ENCODE measurements at regions of chr5 and their contacts with region 1.

Region 1: DNA sequence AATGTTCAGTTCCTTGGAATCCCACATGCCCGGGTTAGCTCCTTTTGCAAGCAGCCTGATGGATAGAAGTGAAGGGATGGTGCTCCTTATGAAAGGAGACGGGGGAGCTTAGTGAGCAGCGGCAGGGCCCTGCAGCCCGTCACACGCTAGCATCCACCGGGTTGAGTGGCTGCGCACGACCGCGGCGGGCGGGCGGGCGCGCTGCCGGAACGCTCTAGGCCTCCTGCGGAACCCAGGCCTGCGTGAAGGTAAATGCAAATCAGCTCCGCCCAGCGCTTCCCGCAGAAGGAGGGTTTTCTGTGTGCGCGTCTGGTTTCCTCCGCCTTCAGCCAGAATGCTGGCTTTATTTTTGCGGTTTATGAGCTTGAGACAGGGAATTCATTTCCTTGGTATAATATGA is 19.8 kb downstream of the IL12B start:
- DNase-seq: peak; percentile 19 to 66
- H3K4me3 ChIP-seq: peak overlapping the region in 3 of 4 experiments; percentile 26 to 51 (median 38); a peak in 6 of 8 replicates
- H3K27ac ChIP-seq: no peak overlapping the region
- H3K4me1 ChIP-seq: peaks cover 0 to 2% (median under 1%) of the 10 kb centered on the region in 4 experiments; a peak in 3 of 7 replicates
- H3K27me3 ChIP-seq: peaks cover 0 to 14% (median 12%) of the 10 kb centered on the region in 4 experiments; a peak in 5 of 7 replicates
- CTCF ChIP-seq: no peak
- EP300 ChIP-seq: no peak
- POLR2A ChIP-seq: no peak
- RAD21 ChIP-seq: no peak

Region 2: DNA sequence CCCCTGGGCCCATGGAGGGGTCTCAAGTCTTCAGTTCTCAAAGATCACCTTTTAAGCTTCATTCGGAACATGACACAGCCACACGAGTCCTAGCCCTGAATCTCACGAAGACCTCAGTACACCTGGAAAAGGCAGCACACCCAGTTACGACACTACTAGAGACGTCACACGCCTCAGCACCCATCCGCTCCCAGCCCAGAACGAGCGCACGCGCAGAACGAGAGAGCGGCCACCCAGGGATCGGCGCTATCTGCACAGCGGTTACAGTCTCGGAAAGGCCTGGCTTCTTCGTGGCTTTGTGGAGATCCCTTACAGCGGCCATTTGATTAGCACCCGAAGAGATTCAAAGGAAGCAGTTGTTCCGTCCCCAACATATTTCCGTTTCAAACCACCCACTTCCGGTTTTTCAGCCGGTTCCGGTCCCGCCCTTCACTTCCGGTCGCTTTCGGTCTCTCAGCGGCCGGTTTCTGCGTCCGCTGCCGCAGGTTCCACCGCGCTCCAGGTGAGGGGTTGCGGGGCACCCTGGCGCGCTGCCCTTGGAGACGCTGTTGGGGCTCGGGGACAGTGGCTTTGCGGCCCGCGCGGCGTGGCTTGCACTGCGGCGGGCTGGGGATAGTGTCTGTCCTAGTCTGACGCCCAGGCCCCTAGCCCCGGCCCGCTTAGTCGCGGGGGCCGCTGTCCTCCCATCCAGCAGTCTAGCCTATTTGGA is 47.5 kb before region 1 on chr5 and contains the start of gene UBLCP1:
- CTCF ChIA-PET with region 1: no interaction called
- POLR2A ChIA-PET with region 1: no interaction called
- DNase-seq: peak; percentile 31 to 83
- H3K4me3 ChIP-seq: peak within 1 kb of the TSS; percentile 88 to 99 (median 97)
- H3K27ac ChIP-seq: peak within 1 kb of the TSS; percentile 90
- H3K4me1 ChIP-seq: no peaks in the 10 kb centered on the region; a peak in 3 of 7 replicates
- H3K27me3 ChIP-seq: peaks cover 0 to 1% (median 0%) of the 10 kb centered on the region in 4 experiments; a peak in 2 of 7 replicates
- CTCF ChIP-seq: no peak
- EP300 ChIP-seq: no peak
- POLR2A ChIP-seq: peak in 1 of 2 experiments; percentile 82; a peak in 2 of 3 replicates
- RAD21 ChIP-seq: no peak
- total RNA-seq, gene UBLCP1: 40.9 and 43.0 TPM in 2 replicates

Region 3: DNA sequence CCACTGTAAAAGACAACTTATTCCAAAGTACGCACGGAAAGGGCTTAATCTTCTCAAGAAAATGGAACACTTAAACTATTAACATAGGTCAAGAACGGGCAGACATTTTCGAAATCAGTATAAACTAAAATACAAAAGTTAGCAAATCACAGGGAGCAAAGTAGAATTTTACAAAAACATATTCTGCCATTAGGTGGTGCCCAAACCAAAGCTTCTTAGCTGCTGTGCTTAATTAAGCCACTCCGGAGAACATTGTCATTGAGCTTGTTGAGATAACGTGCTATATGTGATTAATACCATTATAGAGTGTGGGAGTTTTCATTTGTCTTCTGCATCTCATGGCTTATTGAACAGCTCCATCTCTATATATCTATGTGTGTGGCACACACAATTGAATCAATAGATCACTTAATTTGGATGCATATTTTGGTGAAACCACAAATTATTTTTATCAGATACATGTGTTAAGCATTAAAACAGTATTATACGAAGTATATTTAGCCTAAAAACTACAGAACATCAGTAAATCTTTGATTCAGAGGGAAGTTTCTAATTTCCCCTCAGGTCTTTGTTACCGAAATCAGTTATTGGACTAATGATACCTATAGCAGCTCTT is 24.0 kb before region 1 on chr5:
- CTCF ChIA-PET with region 1: interaction called, 34 read pairs
- POLR2A ChIA-PET with region 1: interaction called, 4 read pairs
- DNase-seq: no peak
- H3K4me3 ChIP-seq: no peak overlapping the region
- H3K27ac ChIP-seq: no peak overlapping the region
- H3K4me1 ChIP-seq: no peaks in the 10 kb centered on the region
- H3K27me3 ChIP-seq: no peaks in the 10 kb centered on the region
- CTCF ChIP-seq: peak in 2 of 3 experiments; percentile 35 to 43; a peak in 2 of 4 replicates
- EP300 ChIP-seq: no peak
- POLR2A ChIP-seq: no peak
- RAD21 ChIP-seq: peak; percentile 80 to 81

Region 4: DNA sequence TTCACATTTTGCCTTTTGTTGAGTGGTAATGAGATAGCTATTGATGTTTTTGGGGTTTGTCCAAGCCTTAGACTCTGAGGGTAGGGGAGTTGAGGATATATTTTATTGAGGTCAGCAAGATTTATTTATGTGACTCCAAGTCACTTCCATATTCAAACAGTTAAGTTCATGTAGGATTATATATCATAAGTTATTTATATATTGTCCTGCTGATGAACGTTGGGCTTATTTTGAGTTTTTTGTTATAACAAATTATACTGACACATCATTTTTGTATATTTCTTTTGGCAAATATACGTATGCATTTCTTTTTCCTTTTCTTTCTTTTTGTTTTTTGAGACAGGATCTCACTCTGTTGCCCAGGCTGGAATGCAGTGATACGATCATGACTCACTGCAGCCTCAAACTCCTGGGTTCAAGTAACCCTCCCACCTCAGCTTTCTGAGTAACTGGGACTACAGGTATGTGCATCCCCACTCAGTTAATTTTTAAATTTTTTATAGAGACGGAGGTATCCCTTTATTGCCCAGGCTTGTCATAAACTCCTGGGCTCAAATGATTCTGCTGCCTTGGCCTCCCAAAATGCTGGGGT is 43.2 kb after region 1 on chr5:
- CTCF ChIA-PET with region 1: no interaction called
- POLR2A ChIA-PET with region 1: no interaction called
- DNase-seq: no peak
- H3K4me3 ChIP-seq: no peak overlapping the region
- H3K27ac ChIP-seq: no peak overlapping the region
- H3K4me1 ChIP-seq: no peaks in the 10 kb centered on the region
- H3K27me3 ChIP-seq: no peaks in the 10 kb centered on the region
- CTCF ChIP-seq: no peak
- EP300 ChIP-seq: no peak
- POLR2A ChIP-seq: no peak
- RAD21 ChIP-seq: no peak